Ascending aorta (tissue), 2 donors: ENCODE measurements at regions of chrX and their contacts with region 1.

Region 1: GRCh38 chrX:130975947-130976346 is 72.9 kb upstream of the ENOX2 start:
- DNase-seq: no peak
- H3K4me3 ChIP-seq: no peak overlapping the region
- H3K27ac ChIP-seq: no peak overlapping the region
- H3K4me1 ChIP-seq: no peaks in the 10 kb centered on the region
- H3K27me3 ChIP-seq: no peaks in the 10 kb centered on the region
- CTCF ChIP-seq: peak in 2 of 3 experiments; percentile 26 to 49

Region 2: GRCh38 chrX:131187206-131187605 is 211.3 kb after region 1 on chrX:
- intact Hi-C with region 1: no loop called
- DNase-seq: no peak
- H3K4me3 ChIP-seq: no peak overlapping the region
- H3K27ac ChIP-seq: no peak overlapping the region
- H3K4me1 ChIP-seq: no peaks in the 10 kb centered on the region
- H3K27me3 ChIP-seq: no peaks in the 10 kb centered on the region
- CTCF ChIP-seq: no peak

Region 3: GRCh38 chrX:131633285-131633917 is 657.5 kb after region 1 on chrX:
- intact Hi-C with region 1: loop called (anchors 10 kb)
- DNase-seq: peak in 1 of 2 donors; percentile 65
- H3K4me3 ChIP-seq: no peak overlapping the region
- H3K27ac ChIP-seq: no peak overlapping the region
- H3K4me1 ChIP-seq: no peaks in the 10 kb centered on the region
- H3K27me3 ChIP-seq: no peaks in the 10 kb centered on the region
- CTCF ChIP-seq: peak; percentile 49 to 84 (median 76)